B cell (primary cell): ENCODE measurements at regions of chr5 and their contacts with region 1.

Region 1: DNA sequence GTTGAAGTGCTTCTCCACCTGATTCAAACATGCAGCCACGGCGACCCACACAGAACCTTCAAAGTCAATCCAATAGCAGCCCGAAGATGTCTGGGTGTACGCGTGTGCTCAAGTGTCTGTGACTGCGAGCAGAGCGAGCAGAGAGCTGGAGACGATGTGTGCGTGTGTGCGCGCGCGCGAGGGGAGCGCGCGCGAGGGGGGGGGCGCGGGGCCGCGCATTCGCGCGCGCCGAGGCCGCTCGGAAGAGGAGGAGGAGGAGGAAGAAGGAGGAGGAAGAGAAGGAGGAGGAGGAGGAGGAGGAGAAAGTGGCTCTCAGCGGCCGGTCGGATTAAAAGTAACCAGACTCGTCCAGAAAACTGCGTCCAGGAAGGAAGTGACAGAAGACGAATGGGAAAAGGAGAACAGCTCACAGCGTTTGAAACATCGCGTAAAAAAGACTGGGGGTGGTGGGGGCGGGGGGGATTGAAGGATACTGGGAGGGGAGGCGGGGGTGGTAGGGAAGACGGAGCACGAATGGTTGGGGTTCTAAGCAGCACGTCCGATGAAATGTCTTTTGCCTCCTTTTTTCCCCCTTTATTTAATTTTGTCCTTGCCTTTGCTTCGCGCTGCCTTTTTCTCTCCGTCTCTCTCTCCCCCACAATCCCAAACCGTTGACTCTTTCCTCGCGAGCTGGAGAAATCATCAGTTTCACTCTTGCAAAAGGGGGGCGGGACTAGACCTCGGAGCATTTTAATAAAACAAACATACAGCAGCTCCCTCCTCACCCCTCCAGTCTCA is at the start of gene MEF2C:
- DNase-seq: peak; percentile 92
- ATAC-seq: peak; percentile 60
- H3K4me3 ChIP-seq: peak within 1 kb of the TSS; percentile 79 to 99 (median 89)
- H3K4me3 Mint-ChIP-seq: peak within 1 kb of the TSS; percentile 98
- H3K27ac ChIP-seq: peak within 1 kb of the TSS; percentile 73 to 90
- H3K27ac Mint-ChIP-seq: peak within 1 kb of the TSS; percentile 97
- H3K4me1 ChIP-seq: peaks cover 28 to 36% of the 10 kb centered on the region in 2 donors
- H3K4me1 Mint-ChIP-seq: peaks cover 50% of the 10 kb centered on the region
- H3K27me3 ChIP-seq: no peaks in the 10 kb centered on the region
- H3K27me3 Mint-ChIP-seq: no peaks in the 10 kb centered on the region
- CTCF ChIP-seq: no peak
- total RNA-seq, gene MEF2C: 333 and 354 TPM in 2 replicates

Region 2: DNA sequence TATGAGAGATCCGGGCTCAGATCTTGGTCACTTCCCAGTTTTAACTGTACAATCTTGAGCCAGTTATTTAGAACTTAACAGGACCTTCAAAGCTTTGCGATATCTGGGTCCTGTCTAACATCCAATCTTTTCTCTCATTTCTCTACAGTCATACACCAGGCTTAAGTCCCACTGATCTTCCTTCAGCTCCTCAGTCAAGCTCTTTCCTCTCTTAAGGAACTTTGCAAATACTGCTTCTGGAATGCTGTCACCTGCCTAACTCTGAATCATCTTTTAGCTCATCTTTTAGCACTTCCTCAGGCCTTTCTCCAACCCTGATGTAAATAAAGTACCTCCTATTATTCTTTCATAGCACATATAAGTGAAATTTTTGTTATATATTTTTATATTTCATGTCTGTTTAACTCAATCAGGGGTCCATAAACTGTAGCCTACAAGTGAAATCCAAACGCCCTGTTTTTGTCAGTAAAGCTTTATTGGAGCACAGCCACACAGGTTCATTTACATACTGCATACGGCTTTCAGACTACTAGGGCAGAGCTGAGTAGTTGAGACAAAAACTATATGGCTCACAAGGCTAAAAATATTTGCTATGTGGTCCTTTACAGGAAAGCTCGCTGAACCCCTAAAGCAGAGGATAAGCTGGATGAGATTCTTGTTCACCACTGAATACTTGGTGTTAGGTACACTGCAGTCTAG is 63.8 kb before region 1 on chr5:
- CTCF ChIA-PET with region 1: interaction called, 4 read pairs
- POLR2A ChIA-PET with region 1: interaction called, 10 read pairs
- intact Hi-C with region 1: no loop called
- DNase-seq: peak; percentile 40
- ATAC-seq: peak; percentile 56
- H3K4me3 ChIP-seq: peak overlapping the region in 3 of 5 experiments; percentile 0 to 35 (median 15)
- H3K4me3 Mint-ChIP-seq: peak overlapping the region; percentile 72
- H3K27ac ChIP-seq: peak overlapping the region; percentile 35 to 94
- H3K27ac Mint-ChIP-seq: peak overlapping the region; percentile 88
- H3K4me1 ChIP-seq: peaks cover 51 to 92% of the 10 kb centered on the region in 2 donors
- H3K4me1 Mint-ChIP-seq: peaks cover 72% of the 10 kb centered on the region
- H3K27me3 ChIP-seq: no peaks in the 10 kb centered on the region
- H3K27me3 Mint-ChIP-seq: no peaks in the 10 kb centered on the region
- CTCF ChIP-seq: no peak

Region 3: GRCh38 chr5:88833371-88834130 is 49.7 kb before region 1 on chr5:
- CTCF ChIA-PET with region 1: interaction called, 6 read pairs
- POLR2A ChIA-PET with region 1: interaction called, 12 read pairs
- intact Hi-C with region 1: no loop called
- DNase-seq: peak; percentile 65
- ATAC-seq: peak; percentile 66
- H3K4me3 ChIP-seq: peak overlapping the region in 3 of 5 experiments; percentile 1 to 47 (median 16)
- H3K4me3 Mint-ChIP-seq: peak overlapping the region; percentile 87
- H3K27ac ChIP-seq: peak overlapping the region; percentile 58 to 94
- H3K27ac Mint-ChIP-seq: peak overlapping the region; percentile 94
- H3K4me1 ChIP-seq: peaks cover 71 to 86% of the 10 kb centered on the region in 2 donors
- H3K4me1 Mint-ChIP-seq: peaks cover 77% of the 10 kb centered on the region
- H3K27me3 ChIP-seq: no peaks in the 10 kb centered on the region
- H3K27me3 Mint-ChIP-seq: no peaks in the 10 kb centered on the region
- CTCF ChIP-seq: no peak

Region 4: DNA sequence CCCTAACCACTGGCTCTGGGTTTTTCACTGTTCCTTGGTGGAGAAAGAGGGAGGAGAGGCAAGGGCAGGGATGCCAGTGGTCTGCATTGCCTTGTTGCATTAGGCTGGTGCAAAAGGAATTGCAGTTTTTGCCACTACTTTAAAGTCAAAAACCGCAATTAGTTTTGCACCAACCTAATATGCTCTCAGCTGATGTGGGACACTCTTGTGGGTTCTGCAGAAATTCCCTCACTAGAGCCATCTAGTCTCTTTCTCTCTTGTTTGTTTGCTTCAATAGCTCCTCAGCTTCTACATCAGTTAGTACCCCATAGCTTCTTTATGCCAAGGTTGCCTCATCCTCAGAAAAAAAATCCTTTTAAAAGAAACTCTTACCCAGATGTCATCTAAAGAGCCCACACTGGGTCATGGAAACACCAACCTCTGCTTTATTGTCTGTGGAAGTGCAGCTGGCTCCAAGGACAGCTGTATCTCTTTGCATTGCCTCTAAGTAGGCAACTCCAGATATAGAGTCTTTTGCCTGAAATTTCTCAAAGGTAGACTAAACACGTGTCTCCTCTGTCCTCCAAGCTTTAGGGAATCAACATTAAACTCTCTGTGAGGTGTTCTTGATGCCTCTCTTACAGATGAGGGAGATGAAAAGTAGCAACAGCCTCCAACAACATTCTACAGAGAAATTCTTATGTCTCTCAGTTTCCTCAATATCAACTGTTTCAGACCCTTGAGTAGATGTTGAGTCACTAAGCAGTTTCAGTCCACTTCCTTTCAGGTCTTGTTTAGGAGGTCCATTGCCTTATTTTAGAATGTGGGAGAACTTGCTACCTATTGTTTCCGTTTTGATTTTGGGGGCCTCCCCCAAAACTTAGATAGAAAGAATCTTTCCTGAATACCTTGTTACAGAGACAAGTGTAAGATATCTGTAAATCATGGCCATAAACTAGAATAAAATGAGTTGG is 84.7 kb after region 1 on chr5:
- CTCF ChIA-PET with region 1: no interaction called
- POLR2A ChIA-PET with region 1: no interaction called
- intact Hi-C with region 1: no loop called
- DNase-seq: no peak
- ATAC-seq: no peak
- H3K4me3 ChIP-seq: no peak overlapping the region
- H3K4me3 Mint-ChIP-seq: no peak overlapping the region
- H3K27ac ChIP-seq: no peak overlapping the region
- H3K27ac Mint-ChIP-seq: no peak overlapping the region
- H3K4me1 ChIP-seq: no peaks in the 10 kb centered on the region
- H3K4me1 Mint-ChIP-seq: peaks cover 1% of the 10 kb centered on the region
- H3K27me3 ChIP-seq: no peaks in the 10 kb centered on the region
- H3K27me3 Mint-ChIP-seq: no peaks in the 10 kb centered on the region
- CTCF ChIP-seq: no peak

Region 5: GRCh38 chr5:89303033-89303480 is 419.8 kb after region 1 on chr5:
- CTCF ChIA-PET with region 1: no interaction called
- POLR2A ChIA-PET with region 1: no interaction called
- intact Hi-C with region 1: loop called (anchors 5 kb)
- DNase-seq: peak; percentile 42
- ATAC-seq: peak; percentile 52
- H3K4me3 ChIP-seq: no peak overlapping the region
- H3K4me3 Mint-ChIP-seq: peak overlapping the region; percentile 56
- H3K27ac ChIP-seq: peak overlapping the region; percentile 11 to 80
- H3K27ac Mint-ChIP-seq: peak overlapping the region; percentile 89
- H3K4me1 ChIP-seq: peaks cover 36 to 41% of the 10 kb centered on the region in 2 donors
- H3K4me1 Mint-ChIP-seq: peaks cover 52% of the 10 kb centered on the region
- H3K27me3 ChIP-seq: no peaks in the 10 kb centered on the region
- H3K27me3 Mint-ChIP-seq: no peaks in the 10 kb centered on the region
- CTCF ChIP-seq: no peak

Region 6: GRCh38 chr5:89729623-89730301 is 846.5 kb after region 1 on chr5:
- CTCF ChIA-PET with region 1: interaction called, 3 read pairs
- POLR2A ChIA-PET with region 1: no interaction called
- intact Hi-C with region 1: loop called (anchors 5 kb)
- DNase-seq: peak; percentile 26
- ATAC-seq: peak; percentile 17
- H3K4me3 ChIP-seq: no peak overlapping the region
- H3K4me3 Mint-ChIP-seq: peak overlapping the region; percentile 14
- H3K27ac ChIP-seq: peak overlapping the region in 1 of 2 donors; percentile 31
- H3K27ac Mint-ChIP-seq: peak overlapping the region; percentile 16
- H3K4me1 ChIP-seq: peaks cover 22 to 27% of the 10 kb centered on the region in 2 donors
- H3K4me1 Mint-ChIP-seq: peaks cover 27% of the 10 kb centered on the region
- H3K27me3 ChIP-seq: no peaks in the 10 kb centered on the region
- H3K27me3 Mint-ChIP-seq: no peaks in the 10 kb centered on the region
- CTCF ChIP-seq: no peak

Region 7: GRCh38 chr5:90409318-90410177 is 1526.3 kb after region 1 on chr5 and contains the start of gene CETN3:
- CTCF ChIA-PET with region 1: no interaction called
- POLR2A ChIA-PET with region 1: no interaction called
- intact Hi-C with region 1: loop called (anchors 10 kb)
- DNase-seq: peak; percentile 95
- ATAC-seq: peak; percentile 92
- H3K4me3 ChIP-seq: peak within 1 kb of the TSS; percentile 93 to 100 (median 98)
- H3K4me3 Mint-ChIP-seq: no peak within 1 kb of the TSS
- H3K27ac ChIP-seq: peak within 1 kb of the TSS; percentile 91 to 94
- H3K27ac Mint-ChIP-seq: no peak within 1 kb of the TSS
- H3K4me1 ChIP-seq: peaks cover 11 to 12% of the 10 kb centered on the region in 2 donors
- H3K4me1 Mint-ChIP-seq: peaks cover 5% of the 10 kb centered on the region
- H3K27me3 ChIP-seq: no peaks in the 10 kb centered on the region
- H3K27me3 Mint-ChIP-seq: no peaks in the 10 kb centered on the region
- CTCF ChIP-seq: no peak
- total RNA-seq, gene CETN3: 17.0 and 18.0 TPM in 2 replicates